IMR-90 (cell line): ENCODE measurements at regions of chr5 and their contacts with region 1.

Region 1: GRCh38 chr5:168987543-168988300 is 313.2 kb downstream of the SLIT3 start:
- DNase-seq: peak; percentile 58
- ATAC-seq: peak; percentile 83
- H3K4me3 ChIP-seq: no peak overlapping the region
- H3K27ac ChIP-seq: no peak overlapping the region
- H3K4me1 ChIP-seq: no peaks in the 10 kb centered on the region
- H3K27me3 ChIP-seq: peaks cover 3% of the 10 kb centered on the region
- CTCF ChIP-seq: peak; percentile 82
- POLR2A ChIP-seq: no peak
- RAD21 ChIP-seq: peak; percentile 82

Region 2: DNA sequence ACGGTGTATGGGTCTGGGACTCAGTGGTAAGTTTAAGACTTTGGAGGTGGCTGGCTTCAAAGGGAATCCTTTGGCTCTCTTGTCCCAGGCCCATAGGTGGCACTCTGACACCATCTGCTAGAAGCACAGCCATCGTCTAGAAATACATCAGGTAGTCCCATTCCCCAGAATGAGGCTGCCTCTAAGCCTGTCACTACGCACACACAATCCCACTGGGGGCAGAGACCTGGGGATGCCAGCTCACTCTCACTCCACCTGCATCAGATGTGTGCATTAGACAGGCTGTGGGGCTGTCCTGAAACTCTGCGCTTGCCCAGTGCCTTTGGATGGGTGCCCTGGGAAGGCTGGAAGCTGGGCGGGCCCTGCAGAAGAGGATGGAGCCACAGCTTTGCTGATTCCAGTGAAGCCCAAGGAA is 281.1 kb before region 1 on chr5:
- CTCF ChIA-PET with region 1: no interaction called
- POLR2A ChIA-PET with region 1: no interaction called
- dilution Hi-C with region 1: no loop called
- in situ Hi-C with region 1: no loop called
- intact Hi-C with region 1: loop called (anchors 10 kb)
- DNase-seq: peak; percentile 47
- ATAC-seq: peak; percentile 75
- H3K4me3 ChIP-seq: no peak overlapping the region
- H3K27ac ChIP-seq: no peak overlapping the region
- H3K4me1 ChIP-seq: no peaks in the 10 kb centered on the region
- H3K27me3 ChIP-seq: no peaks in the 10 kb centered on the region
- CTCF ChIP-seq: peak; percentile 64
- POLR2A ChIP-seq: no peak
- RAD21 ChIP-seq: peak; percentile 75

Region 3: GRCh38 chr5:169548315-169548714 is 560.6 kb after region 1 on chr5:
- CTCF ChIA-PET with region 1: interaction called, 10 read pairs
- POLR2A ChIA-PET with region 1: no interaction called
- dilution Hi-C with region 1: no loop called
- in situ Hi-C with region 1: no loop called
- intact Hi-C with region 1: loop called (anchors 1 kb)
- DNase-seq: peak; percentile 24
- ATAC-seq: peak; percentile 46
- H3K4me3 ChIP-seq: no peak overlapping the region
- H3K27ac ChIP-seq: no peak overlapping the region
- H3K4me1 ChIP-seq: no peaks in the 10 kb centered on the region
- H3K27me3 ChIP-seq: no peaks in the 10 kb centered on the region; the same call in 1 of the 2 replicates
- CTCF ChIP-seq: peak; percentile 48
- POLR2A ChIP-seq: no peak
- RAD21 ChIP-seq: peak; percentile 62

Region 4: GRCh38 chr5:169701910-169702451 is 714.3 kb after region 1 on chr5:
- CTCF ChIA-PET with region 1: no interaction called
- POLR2A ChIA-PET with region 1: no interaction called
- dilution Hi-C with region 1: no loop called
- in situ Hi-C with region 1: no loop called
- intact Hi-C with region 1: loop called (anchors 10 kb)
- DNase-seq: peak; percentile 64
- ATAC-seq: peak; percentile 72
- H3K4me3 ChIP-seq: no peak overlapping the region
- H3K27ac ChIP-seq: no peak overlapping the region
- H3K4me1 ChIP-seq: peaks cover 24% of the 10 kb centered on the region
- H3K27me3 ChIP-seq: no peaks in the 10 kb centered on the region
- CTCF ChIP-seq: peak; percentile 80
- POLR2A ChIP-seq: no peak
- RAD21 ChIP-seq: peak; percentile 78

Region 5: DNA sequence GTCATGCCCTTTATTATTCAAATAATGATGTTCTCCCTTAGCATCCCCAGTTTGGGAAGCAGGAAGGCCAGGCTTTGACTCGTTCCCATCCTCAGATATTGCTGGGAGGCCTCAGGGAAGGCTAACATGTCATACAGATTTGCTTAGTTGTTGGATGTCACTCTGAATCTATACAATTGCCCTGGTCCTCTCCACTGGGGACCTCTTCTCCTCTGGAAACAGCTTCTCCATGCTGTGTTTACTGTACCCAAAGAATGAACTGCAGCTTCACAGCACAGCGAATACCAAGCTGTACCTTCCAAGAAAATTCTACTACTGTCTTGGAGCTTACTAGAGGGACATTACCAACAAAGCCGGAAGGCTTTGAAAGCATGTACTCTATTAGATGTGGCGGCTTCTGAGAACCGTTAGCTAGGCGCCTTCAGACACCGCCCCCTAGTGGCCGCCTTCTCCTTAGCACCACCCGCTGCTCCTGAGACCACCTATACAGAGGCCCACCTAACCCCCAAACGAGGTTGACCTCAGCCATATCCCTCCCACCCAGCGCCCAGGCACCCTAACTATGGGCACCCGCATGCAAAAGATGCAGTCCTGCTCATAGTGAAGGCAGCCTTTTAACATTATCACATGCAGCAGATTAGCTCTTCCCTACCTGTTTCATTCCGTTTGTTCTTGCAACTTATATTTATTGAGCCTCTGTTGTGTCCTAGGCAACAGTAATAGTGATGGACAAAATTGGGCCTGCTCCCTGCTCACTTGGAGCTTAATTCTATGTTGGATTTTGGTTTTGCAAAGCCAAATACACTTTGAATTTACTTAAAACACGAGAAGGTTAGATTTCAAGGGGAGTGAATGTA is 1083.1 kb after region 1 on chr5:
- CTCF ChIA-PET with region 1: no interaction called
- POLR2A ChIA-PET with region 1: no interaction called
- dilution Hi-C with region 1: no loop called
- in situ Hi-C with region 1: no loop called
- intact Hi-C with region 1: loop called (anchors 10 kb)
- DNase-seq: peak; percentile 45
- ATAC-seq: peak; percentile 97
- H3K4me3 ChIP-seq: no peak overlapping the region
- H3K27ac ChIP-seq: no peak overlapping the region
- H3K4me1 ChIP-seq: no peaks in the 10 kb centered on the region
- H3K27me3 ChIP-seq: peaks cover 4% of the 10 kb centered on the region
- CTCF ChIP-seq: peak; percentile 62
- POLR2A ChIP-seq: no peak
- RAD21 ChIP-seq: peak; percentile 72